ENCODE measurements at regions of chr5 and their contacts with region 1.

Region 1: GRCh38 chr5:155540000-155540595 is 526.5 kb downstream of the KIF4B start:
- DNase-seq: no peak
- H3K4me3 ChIP-seq: no peak overlapping the region
- H3K27ac ChIP-seq: no peak overlapping the region
- H3K4me1 ChIP-seq: no peaks in the 10 kb centered on the region
- H3K27me3 ChIP-seq: no peaks in the 10 kb centered on the region
- CTCF ChIP-seq: no peak
- EP300 ChIP-seq: no peak
- POLR2A ChIP-seq: no peak

Region 2: GRCh38 chr5:153714798-153715197 is 1825.3 kb before region 1 on chr5:
- intact Hi-C with region 1: loop called in 1 of 4 experiments (anchors 5 kb)
- DNase-seq: no peak
- H3K4me3 ChIP-seq: no peak overlapping the region
- H3K27ac ChIP-seq: no peak overlapping the region
- H3K4me1 ChIP-seq: no peaks in the 10 kb centered on the region
- H3K27me3 ChIP-seq: no peaks in the 10 kb centered on the region
- CTCF ChIP-seq: no peak
- EP300 ChIP-seq: no peak
- POLR2A ChIP-seq: no peak

Measured in ovary (tissue), 10 donors.